ENCODE measurements at regions of chr16 and their contacts with region 1.

Region 1: DNA sequence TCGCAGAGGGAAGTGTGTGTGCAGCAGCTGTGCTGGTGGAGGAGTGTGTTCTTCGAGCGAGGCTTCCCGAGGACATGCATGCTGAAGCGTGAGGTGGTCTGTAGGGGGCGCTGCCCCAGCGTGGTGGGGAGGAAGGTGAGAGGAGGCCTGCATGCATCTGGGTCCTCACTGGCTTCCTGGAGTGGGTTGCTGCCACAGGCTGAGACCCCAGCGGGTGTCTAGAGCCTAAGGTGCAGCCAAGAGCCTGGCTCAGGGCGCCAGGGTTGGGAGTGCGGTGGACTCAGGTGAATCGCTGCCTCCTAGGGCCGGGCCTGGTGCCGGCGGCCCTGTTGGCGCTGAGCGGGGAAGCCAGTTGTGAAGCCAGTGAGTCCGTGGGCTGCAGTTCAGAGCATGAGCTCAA is 7.5 kb upstream of the HSD3B7 start:
- DNase-seq: peak in 1 of 2 experiments; percentile 21
- H3K4me3 ChIP-seq: no peak overlapping the region
- H3K27ac ChIP-seq: no peak overlapping the region
- H3K4me1 ChIP-seq: no peaks in the 10 kb centered on the region
- H3K27me3 ChIP-seq: no peaks in the 10 kb centered on the region
- CTCF ChIP-seq: peak; percentile 54

Region 2: GRCh38 chr16:31044190-31044481 is 66.6 kb after region 1 on chr16:
- CTCF ChIA-PET with region 1: interaction called, 10 read pairs
- POLR2A ChIA-PET with region 1: no interaction called
- intact Hi-C with region 1: no loop called
- DNase-seq: no peak
- H3K4me3 ChIP-seq: no peak overlapping the region
- H3K27ac ChIP-seq: no peak overlapping the region
- H3K4me1 ChIP-seq: no peaks in the 10 kb centered on the region; the same call in 1 of the 2 replicates
- H3K27me3 ChIP-seq: no peaks in the 10 kb centered on the region
- CTCF ChIP-seq: no peak